Activated naive CD4-positive, alpha-beta T cell treated with anti-CD3 and anti-CD28 coated beads, Interleukin-2, amount 10 ng/mL, durations not matched to agents 7 days and 5 days (primary cell): ENCODE measurements at regions of chr11 and their contacts with region 1.

Region 1: DNA sequence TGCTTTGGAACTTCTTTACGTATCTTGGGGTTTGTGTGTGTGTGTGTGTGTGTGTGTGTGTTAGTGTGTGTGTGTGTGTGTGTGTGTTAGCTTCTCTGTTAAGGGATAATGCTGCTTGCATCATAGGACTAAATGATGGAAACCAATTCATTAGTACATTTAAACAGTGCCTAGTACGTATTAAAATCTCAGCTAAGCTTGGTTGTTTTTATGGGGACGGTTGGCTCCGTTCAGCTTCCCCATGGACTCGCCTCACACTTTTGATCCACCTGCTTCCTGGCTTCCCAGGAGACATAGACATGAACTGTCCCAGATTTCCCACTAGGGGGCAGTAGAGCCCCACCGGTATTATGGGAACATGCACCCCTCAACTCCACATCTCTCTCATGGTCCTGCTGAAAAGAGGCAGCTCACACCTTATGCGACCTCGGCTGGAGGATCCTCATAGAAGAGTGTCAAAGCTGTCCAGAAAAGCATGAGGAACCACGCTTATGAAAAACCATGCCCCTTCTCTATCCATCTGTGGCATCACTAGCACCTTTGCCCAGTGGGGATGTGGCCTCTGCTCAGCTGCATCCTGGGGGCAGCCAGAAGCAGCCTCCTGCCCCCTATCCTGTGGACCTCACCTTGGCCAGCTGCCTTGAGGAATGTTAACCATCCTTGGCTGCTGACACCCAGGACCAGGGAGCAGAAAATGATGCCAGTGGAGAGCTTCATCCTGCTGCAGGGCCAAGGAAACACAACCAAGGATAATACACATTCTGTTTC is 9.7 kb upstream of the SAAL1 start:
- DNase-seq: peak; percentile 75
- H3K4me3 Mint-ChIP-seq: no peak overlapping the region
- H3K27ac Mint-ChIP-seq: no peak overlapping the region
- H3K4me1 Mint-ChIP-seq: no peaks in the 10 kb centered on the region
- H3K27me3 Mint-ChIP-seq: peaks cover 38% of the 10 kb centered on the region

Region 2: DNA sequence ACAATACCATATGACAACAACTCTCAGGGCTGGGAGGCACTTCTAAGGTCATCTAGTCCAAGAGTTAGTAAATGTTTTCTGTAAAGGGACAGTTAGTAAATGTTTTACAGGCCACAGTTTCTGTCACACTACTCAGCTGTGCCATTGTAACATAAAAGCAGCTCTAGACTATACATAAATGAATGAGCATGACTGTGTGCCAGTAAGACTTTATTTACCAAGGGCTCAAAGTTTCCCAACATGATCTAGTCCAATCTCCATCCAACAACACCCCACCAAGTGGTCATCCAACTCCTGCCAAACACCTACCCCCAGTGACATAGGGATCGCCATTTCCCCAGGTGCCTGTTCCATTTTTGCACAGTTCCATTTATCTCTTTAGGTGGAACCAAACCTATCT is 114.8 kb before region 1 on chr11:
- CTCF ChIA-PET with region 1: no interaction called
- DNase-seq: no peak
- H3K4me3 Mint-ChIP-seq: no peak overlapping the region
- H3K27ac Mint-ChIP-seq: no peak overlapping the region
- H3K4me1 Mint-ChIP-seq: peaks cover 8% of the 10 kb centered on the region
- H3K27me3 Mint-ChIP-seq: no peaks in the 10 kb centered on the region

Region 3: GRCh38 chr11:18027475-18027874 is 88.1 kb before region 1 on chr11:
- CTCF ChIA-PET with region 1: no interaction called
- DNase-seq: no peak
- H3K4me3 Mint-ChIP-seq: no peak overlapping the region
- H3K27ac Mint-ChIP-seq: no peak overlapping the region
- H3K4me1 Mint-ChIP-seq: peaks cover 2% of the 10 kb centered on the region
- H3K27me3 Mint-ChIP-seq: peaks cover 3% of the 10 kb centered on the region

Region 4: DNA sequence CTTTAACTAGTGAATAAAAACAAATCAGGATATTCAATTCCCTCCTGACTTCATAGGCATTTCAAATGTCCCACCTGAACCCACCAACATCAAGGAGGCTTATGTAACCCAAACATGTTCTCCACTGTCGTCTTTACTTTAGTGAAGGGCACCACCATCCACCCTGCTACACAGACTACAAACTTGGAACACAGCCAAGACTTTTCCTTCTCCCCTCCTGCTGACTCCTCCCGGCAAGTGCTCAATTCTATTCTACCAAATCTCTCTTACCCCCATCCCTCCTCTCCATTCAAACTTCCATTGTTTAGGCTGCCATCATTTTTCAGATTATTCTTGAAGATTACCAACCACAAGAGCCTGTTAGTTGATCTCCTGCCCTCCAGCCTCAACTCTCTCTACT is 34.0 kb before region 1 on chr11:
- CTCF ChIA-PET with region 1: no interaction called
- DNase-seq: no peak
- H3K4me3 Mint-ChIP-seq: no peak overlapping the region
- H3K27ac Mint-ChIP-seq: no peak overlapping the region
- H3K4me1 Mint-ChIP-seq: no peaks in the 10 kb centered on the region
- H3K27me3 Mint-ChIP-seq: no peaks in the 10 kb centered on the region

Region 5: GRCh38 chr11:18193010-18193409 is 77.5 kb after region 1 on chr11:
- CTCF ChIA-PET with region 1: no interaction called
- DNase-seq: no peak
- H3K4me3 Mint-ChIP-seq: no peak overlapping the region
- H3K27ac Mint-ChIP-seq: no peak overlapping the region
- H3K4me1 Mint-ChIP-seq: no peaks in the 10 kb centered on the region
- H3K27me3 Mint-ChIP-seq: peaks cover 22% of the 10 kb centered on the region

Region 6: GRCh38 chr11:18203723-18204122 is 88.2 kb after region 1 on chr11:
- CTCF ChIA-PET with region 1: interaction called, 12 read pairs
- DNase-seq: no peak
- H3K4me3 Mint-ChIP-seq: no peak overlapping the region
- H3K27ac Mint-ChIP-seq: no peak overlapping the region
- H3K4me1 Mint-ChIP-seq: no peaks in the 10 kb centered on the region
- H3K27me3 Mint-ChIP-seq: peaks cover 61% of the 10 kb centered on the region

Region 7: DNA sequence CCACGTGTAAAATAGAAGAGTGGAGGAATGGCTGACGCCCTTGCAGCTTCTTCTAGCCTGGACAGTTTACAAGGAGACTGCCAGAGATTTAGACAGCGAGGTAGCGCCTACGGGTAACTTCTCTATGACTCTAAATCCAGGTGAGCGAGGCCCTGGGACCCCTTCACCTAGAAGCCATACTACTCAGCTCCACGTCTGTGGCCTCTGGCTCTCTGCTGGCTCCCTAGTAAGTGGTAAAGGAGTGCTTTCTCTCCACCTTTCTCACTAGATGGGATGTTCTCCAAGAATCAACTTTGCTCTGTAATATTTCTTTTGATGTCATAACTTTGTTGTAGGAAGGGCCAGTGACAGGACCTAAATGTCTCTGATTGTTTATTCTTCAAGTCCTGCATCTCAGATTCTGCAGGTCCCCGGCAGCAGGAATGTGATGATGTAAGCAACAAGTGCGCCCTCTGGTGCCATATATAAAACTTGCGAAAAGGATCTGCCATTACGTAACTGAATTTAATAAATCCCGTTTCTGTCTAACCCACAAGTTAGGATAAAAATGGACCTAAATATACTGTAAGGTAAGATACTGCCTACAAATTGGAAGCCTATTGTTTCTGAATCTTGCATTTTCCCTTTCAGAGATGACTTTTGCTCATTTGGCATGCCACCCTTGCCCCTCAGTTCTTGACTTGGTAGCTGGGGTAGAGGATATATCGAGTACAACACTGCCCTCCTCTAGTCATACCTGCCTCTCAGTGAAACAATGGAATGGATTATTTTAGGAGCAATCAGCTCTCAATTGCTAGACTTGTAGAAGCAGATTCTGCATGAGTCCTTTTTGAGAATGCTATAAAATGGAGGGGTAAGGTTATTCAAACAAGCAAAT is 687.1 kb after region 1 on chr11:
- CTCF ChIA-PET with region 1: interaction called, 10 read pairs
- DNase-seq: peak; percentile 52
- H3K4me3 Mint-ChIP-seq: no peak overlapping the region
- H3K27ac Mint-ChIP-seq: no peak overlapping the region
- H3K4me1 Mint-ChIP-seq: no peaks in the 10 kb centered on the region
- H3K27me3 Mint-ChIP-seq: peaks cover 22% of the 10 kb centered on the region